Activated B cell treated with CpG ODN at 0.5 μM for 24 hours (primary cell): ENCODE measurements at regions of chr12 and their contacts with region 1.

Region 1: DNA sequence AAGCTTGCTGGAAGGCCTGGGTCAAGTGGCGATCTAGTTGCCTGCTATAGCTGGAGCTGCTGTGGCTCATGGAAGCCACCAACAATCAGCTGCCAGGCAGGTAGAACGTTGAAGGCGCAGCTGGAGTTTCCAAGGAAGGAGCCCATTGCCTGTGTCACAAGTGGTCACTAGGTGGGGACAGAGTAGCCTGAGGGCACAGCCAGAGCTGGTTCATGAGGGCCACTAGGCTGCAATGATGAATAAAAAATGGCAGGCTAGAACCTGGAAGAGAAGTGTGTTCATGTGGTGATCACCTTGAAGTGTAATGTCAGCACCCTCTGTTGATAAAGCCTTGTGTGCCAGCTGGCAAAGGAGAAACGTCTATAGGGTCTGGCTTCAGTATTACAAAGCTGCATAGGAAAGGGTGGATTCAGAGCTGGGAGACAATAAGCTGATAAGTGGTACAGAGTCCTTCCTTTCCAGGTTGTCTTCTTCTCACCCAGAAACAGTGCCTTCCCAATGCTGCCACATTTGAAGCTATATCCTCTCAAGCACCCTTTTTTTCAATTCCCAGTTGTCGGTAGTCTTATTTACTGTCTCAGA is 165.8 kb downstream of the EMP1 start:
- DNase-seq: peak; percentile 33
- ATAC-seq: peak; percentile 84
- H3K4me3 Mint-ChIP-seq: no peak overlapping the region
- H3K27ac Mint-ChIP-seq: no peak overlapping the region
- H3K4me1 Mint-ChIP-seq: no peaks in the 10 kb centered on the region
- H3K27me3 Mint-ChIP-seq: peaks cover 11% of the 10 kb centered on the region
- CTCF ChIP-seq: peak; percentile 63

Region 2: DNA sequence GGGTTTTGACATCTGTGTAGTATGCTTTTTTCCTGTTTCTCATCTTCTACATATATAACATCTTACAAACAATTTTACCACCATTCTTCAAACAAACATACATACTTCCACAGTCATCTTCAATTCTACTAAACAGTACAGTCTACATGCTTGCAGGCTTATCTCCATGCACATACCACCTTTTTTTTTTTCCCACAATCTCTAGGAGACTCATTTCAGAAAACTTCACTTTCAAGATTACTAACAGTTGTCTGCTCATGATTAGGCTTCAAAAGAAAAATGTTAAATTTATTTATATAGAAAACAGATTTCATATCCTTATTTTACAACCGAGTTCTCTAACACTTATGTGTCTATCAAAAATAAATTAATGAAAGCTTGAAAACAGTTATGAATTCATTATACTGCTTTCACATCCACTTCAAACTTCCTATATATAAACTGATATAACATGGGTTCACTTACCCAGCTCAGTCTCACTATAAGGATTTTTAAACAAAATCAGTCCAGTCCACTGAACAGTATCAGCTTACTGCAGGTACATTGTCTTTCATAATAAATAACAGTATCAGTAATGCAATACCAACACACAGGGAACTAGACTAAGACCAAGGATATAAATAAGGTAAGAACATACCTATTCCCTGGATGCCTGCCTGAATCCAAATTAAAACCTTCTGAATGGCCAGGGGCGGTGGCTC is 1138.0 kb before region 1 on chr12:
- CTCF ChIA-PET with region 1: no interaction called
- POLR2A ChIA-PET with region 1: no interaction called
- intact Hi-C with region 1: no loop called
- DNase-seq: no peak
- ATAC-seq: no peak
- H3K4me3 Mint-ChIP-seq: no peak overlapping the region
- H3K27ac Mint-ChIP-seq: no peak overlapping the region
- H3K4me1 Mint-ChIP-seq: no peaks in the 10 kb centered on the region
- H3K27me3 Mint-ChIP-seq: peaks cover 5% of the 10 kb centered on the region
- CTCF ChIP-seq: no peak

Region 3: GRCh38 chr12:13044002-13044905 is 318.1 kb before region 1 on chr12 and contains the start of gene FAM234B:
- CTCF ChIA-PET with region 1: no interaction called
- POLR2A ChIA-PET with region 1: no interaction called
- intact Hi-C with region 1: no loop called
- DNase-seq: peak; percentile 73
- ATAC-seq: peak; percentile 96
- H3K4me3 Mint-ChIP-seq: peak within 1 kb of the TSS; percentile 89
- H3K27ac Mint-ChIP-seq: peak within 1 kb of the TSS; percentile 80
- H3K4me1 Mint-ChIP-seq: peaks cover 18% of the 10 kb centered on the region
- H3K27me3 Mint-ChIP-seq: no peaks in the 10 kb centered on the region
- CTCF ChIP-seq: no peak
- total RNA-seq, gene FAM234B: 4.7 and 6.3 TPM in 2 replicates

Region 4: DNA sequence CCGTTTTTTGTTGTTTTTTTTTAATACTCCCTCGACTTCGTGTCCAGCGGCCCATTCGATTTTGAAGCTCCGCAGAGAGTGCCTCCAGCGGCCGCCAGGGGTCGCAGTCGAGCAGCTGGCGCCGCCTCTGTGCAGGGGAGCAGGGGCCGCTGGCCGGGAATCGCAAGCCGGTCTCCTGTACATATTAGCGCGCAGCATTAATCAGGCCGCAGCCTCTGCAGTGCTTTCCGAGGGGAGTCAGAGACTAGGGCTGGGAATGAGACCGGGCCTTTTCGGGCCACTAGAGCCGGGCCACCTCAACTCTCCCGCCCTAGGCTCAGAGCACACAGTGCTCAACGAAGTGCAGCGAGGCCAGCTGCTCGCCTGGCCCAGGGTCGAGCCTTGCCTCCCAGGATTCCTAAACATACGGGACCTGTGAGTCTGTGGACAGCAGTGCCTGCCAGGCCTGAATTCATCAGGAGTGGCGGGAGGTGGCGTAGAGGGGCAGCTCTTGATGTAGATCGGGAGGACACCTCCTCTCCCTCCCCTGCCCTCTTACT is 84.0 kb before region 1 on chr12:
- CTCF ChIA-PET with region 1: no interaction called
- POLR2A ChIA-PET with region 1: no interaction called
- intact Hi-C with region 1: loop called (anchors 1 kb)
- DNase-seq: peak; percentile 58
- ATAC-seq: peak; percentile 69
- H3K4me3 Mint-ChIP-seq: peak overlapping the region; percentile 17
- H3K27ac Mint-ChIP-seq: no peak overlapping the region
- H3K4me1 Mint-ChIP-seq: peaks cover 4% of the 10 kb centered on the region
- H3K27me3 Mint-ChIP-seq: peaks cover 27% of the 10 kb centered on the region
- CTCF ChIP-seq: peak; percentile 49

Region 5: DNA sequence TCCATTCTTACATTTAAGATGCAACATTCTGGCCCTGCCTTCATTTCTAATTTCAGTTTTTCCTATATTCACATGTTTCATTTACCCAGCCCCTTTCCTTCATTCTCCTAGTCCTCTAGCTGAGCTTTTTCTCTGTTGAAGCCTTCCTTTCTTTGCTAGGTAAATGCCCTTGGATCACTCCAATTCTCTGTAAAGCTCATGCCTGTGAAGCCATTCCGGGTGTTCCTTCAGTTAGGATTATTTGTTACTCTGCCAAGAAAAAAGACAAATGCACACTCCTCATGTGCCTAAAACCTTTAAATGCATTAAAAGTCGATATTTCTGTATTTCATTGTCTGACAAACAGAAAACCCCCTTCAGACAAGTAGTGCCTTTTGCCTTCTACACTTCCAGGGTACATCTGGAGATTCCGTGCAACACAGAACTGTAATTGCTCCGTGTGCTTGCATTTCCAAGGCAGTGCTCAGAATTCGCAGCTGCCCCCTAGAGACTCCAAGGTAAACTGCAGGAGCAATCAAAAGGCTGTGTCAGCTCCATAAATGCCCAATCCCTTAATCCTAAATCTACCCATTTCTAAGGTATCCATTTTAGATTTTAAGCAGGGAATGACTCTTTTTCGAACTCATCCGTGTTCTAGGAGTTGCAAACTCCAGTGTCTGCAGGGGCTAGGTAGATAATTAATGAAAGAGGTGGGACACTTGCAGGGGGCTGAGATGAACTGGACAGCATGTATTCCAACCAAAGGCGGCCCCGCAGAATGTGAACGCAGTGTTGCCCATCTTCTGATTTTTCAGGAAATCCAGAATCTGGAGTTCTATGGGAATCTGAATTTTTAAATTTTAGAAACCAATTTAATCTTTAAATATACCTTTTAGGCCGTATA is 298.9 kb after region 1 on chr12:
- CTCF ChIA-PET with region 1: interaction called, 95 read pairs
- POLR2A ChIA-PET with region 1: no interaction called
- intact Hi-C with region 1: loop called (anchors 1 kb)
- DNase-seq: no peak
- ATAC-seq: peak; percentile 58
- H3K4me3 Mint-ChIP-seq: no peak overlapping the region
- H3K27ac Mint-ChIP-seq: no peak overlapping the region
- H3K4me1 Mint-ChIP-seq: no peaks in the 10 kb centered on the region
- H3K27me3 Mint-ChIP-seq: no peaks in the 10 kb centered on the region
- CTCF ChIP-seq: peak; percentile 68

Region 6: GRCh38 chr12:13666806-13667205 is 304.5 kb after region 1 on chr12:
- CTCF ChIA-PET with region 1: interaction called, 95 read pairs
- POLR2A ChIA-PET with region 1: no interaction called
- intact Hi-C with region 1: no loop called
- DNase-seq: no peak
- ATAC-seq: no peak
- H3K4me3 Mint-ChIP-seq: no peak overlapping the region
- H3K27ac Mint-ChIP-seq: no peak overlapping the region
- H3K4me1 Mint-ChIP-seq: no peaks in the 10 kb centered on the region
- H3K27me3 Mint-ChIP-seq: peaks cover 15% of the 10 kb centered on the region
- CTCF ChIP-seq: no peak

Region 7: DNA sequence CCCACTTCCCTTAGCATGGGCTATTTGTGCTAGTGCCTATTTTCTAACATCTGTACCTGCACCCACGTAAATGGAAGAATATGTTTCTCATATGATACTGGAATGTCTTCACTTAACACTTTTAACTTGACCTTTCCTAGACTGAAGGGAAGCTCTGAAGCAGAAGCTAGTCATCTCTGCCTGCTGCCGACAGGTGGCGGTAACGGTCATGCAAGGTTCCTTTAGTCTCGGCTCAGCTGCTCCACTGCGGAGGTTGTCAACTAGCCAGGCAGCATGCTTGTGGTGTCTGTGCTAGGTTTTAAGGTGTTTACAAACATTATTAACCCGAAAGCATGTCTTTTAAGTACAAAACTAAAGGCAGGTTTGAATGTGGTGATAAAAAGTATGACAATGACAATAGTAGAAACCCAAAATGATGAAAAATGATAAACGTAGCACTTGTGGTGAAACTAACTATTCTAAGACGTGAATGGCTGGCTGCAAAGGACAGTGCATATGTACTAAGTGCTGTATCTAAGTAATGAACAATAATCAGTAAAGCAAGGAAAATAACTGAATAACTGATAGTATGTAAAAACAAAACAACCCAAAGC is 501.8 kb after region 1 on chr12:
- CTCF ChIA-PET with region 1: interaction called, 11 read pairs
- POLR2A ChIA-PET with region 1: no interaction called
- intact Hi-C with region 1: loop called (anchors 5 kb)
- DNase-seq: peak; percentile 45
- ATAC-seq: peak; percentile 79
- H3K4me3 Mint-ChIP-seq: no peak overlapping the region
- H3K27ac Mint-ChIP-seq: no peak overlapping the region
- H3K4me1 Mint-ChIP-seq: no peaks in the 10 kb centered on the region
- H3K27me3 Mint-ChIP-seq: peaks cover 29% of the 10 kb centered on the region
- CTCF ChIP-seq: peak; percentile 80

Region 8: GRCh38 chr12:13941258-13942249 is 579.2 kb after region 1 on chr12:
- CTCF ChIA-PET with region 1: interaction called, 7 read pairs
- POLR2A ChIA-PET with region 1: no interaction called
- intact Hi-C with region 1: loop called (anchors 1 kb)
- DNase-seq: no peak
- ATAC-seq: peak; percentile 31
- H3K4me3 Mint-ChIP-seq: no peak overlapping the region
- H3K27ac Mint-ChIP-seq: no peak overlapping the region
- H3K4me1 Mint-ChIP-seq: peaks cover 7% of the 10 kb centered on the region
- H3K27me3 Mint-ChIP-seq: peaks cover 20% of the 10 kb centered on the region
- CTCF ChIP-seq: no peak